CD4-positive, alpha-beta memory T cell (primary cell): ENCODE measurements at regions of chr11 and their contacts with region 1.

Region 1: DNA sequence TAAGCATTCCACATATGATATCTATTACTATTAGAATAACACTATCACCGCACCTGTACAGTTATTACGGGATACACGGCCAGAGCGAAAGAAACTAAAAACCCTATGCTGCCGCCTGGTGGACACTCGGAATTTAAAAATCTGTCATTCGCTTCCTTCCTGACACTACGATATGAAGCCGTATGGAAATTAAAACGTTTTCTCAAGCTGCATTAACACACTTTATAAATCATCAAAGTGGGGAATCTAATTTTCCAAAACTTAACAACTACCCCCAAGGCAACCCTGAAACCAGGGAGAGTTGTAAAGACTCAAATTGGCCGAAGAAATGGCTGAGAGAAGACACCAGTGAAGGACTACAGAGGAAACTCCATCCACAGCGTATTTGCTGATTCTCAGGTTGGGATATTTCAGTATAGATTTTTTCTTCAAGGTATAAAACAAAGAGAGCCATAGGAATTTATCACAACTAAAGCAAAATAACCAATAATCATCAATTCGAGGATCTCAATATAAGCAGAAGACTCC is 1.4 kb downstream of the CCDC73 start:
- DNase-seq: peak in 4 of 5 donors; percentile 53 to 57 (median 54)
- H3K4me3 ChIP-seq: no peak overlapping the region
- H3K4me3 Mint-ChIP-seq: peak overlapping the region in 4 of 8 donors; percentile 7 to 56 (median 47)
- H3K27ac ChIP-seq: no peak overlapping the region
- H3K27ac Mint-ChIP-seq: no peak overlapping the region
- H3K4me1 ChIP-seq: peaks cover 8% of the 10 kb centered on the region
- H3K4me1 Mint-ChIP-seq: peaks cover 2 to 7% (median 3%) of the 10 kb centered on the region in 4 donors
- H3K27me3 ChIP-seq: no peaks in the 10 kb centered on the region
- H3K27me3 Mint-ChIP-seq: peaks cover 8 to 9% of the 10 kb centered on the region in 2 donors

Region 2: GRCh38 chr11:32029721-32030120 is 763.3 kb before region 1 on chr11:
- CTCF ChIA-PET with region 1: no interaction called
- POLR2A ChIA-PET with region 1: no interaction called
- intact Hi-C with region 1: no loop called
- DNase-seq: no peak
- H3K4me3 ChIP-seq: no peak overlapping the region
- H3K4me3 Mint-ChIP-seq: no peak overlapping the region
- H3K27ac ChIP-seq: no peak overlapping the region
- H3K27ac Mint-ChIP-seq: no peak overlapping the region
- H3K4me1 ChIP-seq: no peaks in the 10 kb centered on the region
- H3K4me1 Mint-ChIP-seq: peaks cover 0 to 5% (median 3%) of the 10 kb centered on the region in 4 donors
- H3K27me3 ChIP-seq: no peaks in the 10 kb centered on the region
- H3K27me3 Mint-ChIP-seq: peaks cover 11 to 20% of the 10 kb centered on the region in 2 donors

Region 3: GRCh38 chr11:32312865-32313403 is 480.1 kb before region 1 on chr11:
- CTCF ChIA-PET with region 1: interaction called, 94 read pairs
- POLR2A ChIA-PET with region 1: no interaction called
- intact Hi-C with region 1: no loop called
- DNase-seq: peak in 1 of 5 donors; percentile 7
- H3K4me3 ChIP-seq: no peak overlapping the region
- H3K4me3 Mint-ChIP-seq: no peak overlapping the region
- H3K27ac ChIP-seq: no peak overlapping the region
- H3K27ac Mint-ChIP-seq: no peak overlapping the region
- H3K4me1 ChIP-seq: no peaks in the 10 kb centered on the region
- H3K4me1 Mint-ChIP-seq: peaks cover 0 to 7% (median 5%) of the 10 kb centered on the region in 4 donors
- H3K27me3 ChIP-seq: no peaks in the 10 kb centered on the region
- H3K27me3 Mint-ChIP-seq: peaks cover 2 to 7% of the 10 kb centered on the region in 2 donors

Region 4: DNA sequence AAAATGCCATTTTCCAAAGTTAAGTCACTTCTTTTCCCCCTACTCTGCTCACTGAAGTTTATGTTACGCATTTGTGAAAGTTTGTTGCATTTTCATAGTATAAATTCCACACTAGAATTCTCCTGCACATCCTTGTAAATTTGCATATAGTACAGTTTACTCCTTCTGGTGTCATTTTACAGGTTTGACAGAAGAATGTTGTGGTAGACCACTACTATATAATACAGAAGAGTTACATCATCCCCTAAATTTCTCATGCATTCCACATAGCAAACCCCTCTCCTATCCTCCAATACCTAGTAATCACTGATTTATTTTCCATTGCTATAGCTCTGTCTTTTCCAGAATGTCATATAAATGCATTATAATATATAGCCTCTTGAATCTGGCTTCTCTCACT is 63.0 kb before region 1 on chr11:
- CTCF ChIA-PET with region 1: no interaction called
- POLR2A ChIA-PET with region 1: no interaction called
- intact Hi-C with region 1: no loop called
- DNase-seq: no peak
- H3K4me3 ChIP-seq: no peak overlapping the region
- H3K4me3 Mint-ChIP-seq: no peak overlapping the region
- H3K27ac ChIP-seq: no peak overlapping the region
- H3K27ac Mint-ChIP-seq: no peak overlapping the region
- H3K4me1 ChIP-seq: no peaks in the 10 kb centered on the region
- H3K4me1 Mint-ChIP-seq: no peaks in the 10 kb centered on the region
- H3K27me3 ChIP-seq: no peaks in the 10 kb centered on the region
- H3K27me3 Mint-ChIP-seq: peaks cover 8 to 19% of the 10 kb centered on the region in 2 donors

Region 5: GRCh38 chr11:32809313-32809712 is 16.3 kb after region 1 on chr11:
- CTCF ChIA-PET with region 1: interaction called, 12 read pairs
- POLR2A ChIA-PET with region 1: no interaction called
- intact Hi-C with region 1: no loop called
- DNase-seq: peak in 3 of 5 donors; percentile 7 to 13 (median 13)
- H3K4me3 ChIP-seq: no peak overlapping the region
- H3K4me3 Mint-ChIP-seq: no peak overlapping the region
- H3K27ac ChIP-seq: no peak overlapping the region
- H3K27ac Mint-ChIP-seq: no peak overlapping the region
- H3K4me1 ChIP-seq: no peaks in the 10 kb centered on the region
- H3K4me1 Mint-ChIP-seq: no peaks in the 10 kb centered on the region
- H3K27me3 ChIP-seq: no peaks in the 10 kb centered on the region
- H3K27me3 Mint-ChIP-seq: no peaks in the 10 kb centered on the region

Region 6: GRCh38 chr11:32893343-32894148 is 100.5 kb after region 1 on chr11:
- CTCF ChIA-PET with region 1: no interaction called
- POLR2A ChIA-PET with region 1: no interaction called
- intact Hi-C with region 1: loop called (anchors 2 kb)
- DNase-seq: peak in 3 of 5 donors; percentile 36 to 61 (median 38)
- H3K4me3 ChIP-seq: peak overlapping the region; percentile 57 to 72
- H3K4me3 Mint-ChIP-seq: peak overlapping the region; percentile 87 to 96 (median 94)
- H3K27ac ChIP-seq: peak overlapping the region; percentile 58
- H3K27ac Mint-ChIP-seq: peak overlapping the region; percentile 84 to 94 (median 88)
- H3K4me1 ChIP-seq: peaks cover 17% of the 10 kb centered on the region
- H3K4me1 Mint-ChIP-seq: peaks cover 20 to 36% (median 29%) of the 10 kb centered on the region in 4 donors
- H3K27me3 ChIP-seq: no peaks in the 10 kb centered on the region
- H3K27me3 Mint-ChIP-seq: no peaks in the 10 kb centered on the region